HepG2 (cell line): ENCODE measurements at regions of chr12 and their contacts with region 1.

Region 1: GRCh38 chr12:58814036-58814435 is 106.3 kb downstream of the LRIG3 start:
- DNase-seq: no peak
- ATAC-seq: no peak
- H3K4me3 ChIP-seq: no peak overlapping the region
- H3K27ac ChIP-seq: no peak overlapping the region
- H3K4me1 ChIP-seq: no peaks in the 10 kb centered on the region
- H3K27me3 ChIP-seq: no peaks in the 10 kb centered on the region
- CTCF ChIP-seq: no peak
- EP300 ChIP-seq: no peak
- POLR2A ChIP-seq: no peak
- RAD21 ChIP-seq: no peak

Region 2: DNA sequence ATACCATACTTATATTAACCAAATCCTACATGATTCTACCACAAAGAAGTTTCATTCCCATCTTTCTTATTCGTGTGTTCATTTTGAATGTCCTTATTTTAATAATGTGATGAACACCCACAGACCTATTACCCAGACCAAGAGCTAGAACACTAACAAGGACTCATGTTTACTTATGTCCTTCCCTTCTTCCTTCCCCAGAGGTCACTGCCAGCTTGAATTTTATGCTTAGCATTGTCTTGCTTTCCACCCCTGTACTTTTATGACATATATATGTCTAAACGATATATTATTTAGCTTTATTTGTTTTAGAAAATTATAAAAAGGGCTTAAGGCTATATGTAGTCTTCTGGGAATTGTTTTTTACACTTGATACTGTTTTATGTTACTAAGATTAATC is 132.3 kb before region 1 on chr12:
- CTCF ChIA-PET with region 1: no interaction called
- POLR2A ChIA-PET with region 1: no interaction called
- in situ Hi-C with region 1: no loop called
- intact Hi-C with region 1: loop called (anchors 10 kb)
- DNase-seq: no peak
- ATAC-seq: peak; percentile 47; the same call in 1 of the 3 replicates
- H3K4me3 ChIP-seq: no peak overlapping the region
- H3K27ac ChIP-seq: no peak overlapping the region
- H3K4me1 ChIP-seq: no peaks in the 10 kb centered on the region
- H3K27me3 ChIP-seq: no peaks in the 10 kb centered on the region
- CTCF ChIP-seq: peak; percentile 60
- EP300 ChIP-seq: no peak
- POLR2A ChIP-seq: no peak
- RAD21 ChIP-seq: no peak

Region 3: DNA sequence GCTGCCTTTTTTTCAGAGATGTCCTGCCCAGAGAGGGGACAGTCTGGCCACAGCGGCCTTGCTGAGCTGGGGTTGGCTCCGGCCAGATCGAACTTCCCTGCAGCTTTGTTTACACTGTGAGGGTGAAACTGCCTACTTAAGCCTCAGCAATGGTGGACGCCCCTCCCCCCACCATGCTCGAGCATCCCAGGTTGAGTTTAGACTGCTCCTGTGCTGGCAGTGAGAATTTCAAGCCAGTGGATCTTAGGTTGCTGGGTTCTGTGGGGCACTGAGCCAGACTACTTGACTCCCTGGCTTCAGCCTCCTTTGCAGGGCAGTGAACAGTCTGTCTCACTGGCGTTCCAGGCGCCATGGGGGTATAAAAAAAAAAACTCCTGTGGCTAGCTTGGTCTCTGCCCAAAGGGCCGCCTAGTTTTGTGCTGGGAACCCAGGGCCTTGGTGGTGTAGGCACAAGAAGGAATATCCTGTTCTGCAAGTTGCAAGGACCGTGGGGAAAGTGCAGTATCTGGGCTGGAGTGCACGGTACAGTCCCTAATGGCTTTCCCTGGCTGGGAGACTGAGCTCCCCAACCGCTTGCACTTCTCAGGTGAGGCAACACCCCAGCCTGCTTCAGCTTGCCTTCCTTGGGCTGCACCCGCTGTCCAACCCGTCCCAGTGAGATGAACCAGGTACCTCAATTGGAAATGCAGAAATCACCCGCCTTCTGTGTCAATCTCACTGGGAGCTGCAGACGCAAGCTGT is 27.2 kb after region 1 on chr12:
- CTCF ChIA-PET with region 1: no interaction called
- POLR2A ChIA-PET with region 1: no interaction called
- in situ Hi-C with region 1: no loop called
- intact Hi-C with region 1: no loop called
- DNase-seq: no peak
- ATAC-seq: peak; percentile 83
- H3K4me3 ChIP-seq: no peak overlapping the region
- H3K27ac ChIP-seq: no peak overlapping the region
- H3K4me1 ChIP-seq: peaks cover 9% of the 10 kb centered on the region; the same call in 1 of the 2 replicates
- H3K27me3 ChIP-seq: no peaks in the 10 kb centered on the region
- CTCF ChIP-seq: no peak
- EP300 ChIP-seq: no peak
- POLR2A ChIP-seq: no peak
- RAD21 ChIP-seq: no peak